ENCODE measurements at regions of chr10 and their contacts with region 1.

Region 1: GRCh38 chr10:72048450-72049124 is 39.8 kb downstream of the SPOCK2 start:
- DNase-seq: peak; percentile 66 to 95 (median 82)
- ATAC-seq: peak; percentile 85 to 98 (median 96)
- H3K4me3 ChIP-seq: no peak overlapping the region
- H3K4me3 Mint-ChIP-seq: no peak overlapping the region
- H3K27ac ChIP-seq: no peak overlapping the region
- H3K27ac Mint-ChIP-seq: peak overlapping the region; percentile 21 to 72
- H3K4me1 ChIP-seq: no peaks in the 10 kb centered on the region
- H3K4me1 Mint-ChIP-seq: peaks cover 7 to 8% (median 7%) of the 10 kb centered on the region in 3 donors
- H3K27me3 ChIP-seq: peaks cover 0 to under 1% of the 10 kb centered on the region in 2 experiments
- H3K27me3 Mint-ChIP-seq: no peaks in the 10 kb centered on the region

Region 2: DNA sequence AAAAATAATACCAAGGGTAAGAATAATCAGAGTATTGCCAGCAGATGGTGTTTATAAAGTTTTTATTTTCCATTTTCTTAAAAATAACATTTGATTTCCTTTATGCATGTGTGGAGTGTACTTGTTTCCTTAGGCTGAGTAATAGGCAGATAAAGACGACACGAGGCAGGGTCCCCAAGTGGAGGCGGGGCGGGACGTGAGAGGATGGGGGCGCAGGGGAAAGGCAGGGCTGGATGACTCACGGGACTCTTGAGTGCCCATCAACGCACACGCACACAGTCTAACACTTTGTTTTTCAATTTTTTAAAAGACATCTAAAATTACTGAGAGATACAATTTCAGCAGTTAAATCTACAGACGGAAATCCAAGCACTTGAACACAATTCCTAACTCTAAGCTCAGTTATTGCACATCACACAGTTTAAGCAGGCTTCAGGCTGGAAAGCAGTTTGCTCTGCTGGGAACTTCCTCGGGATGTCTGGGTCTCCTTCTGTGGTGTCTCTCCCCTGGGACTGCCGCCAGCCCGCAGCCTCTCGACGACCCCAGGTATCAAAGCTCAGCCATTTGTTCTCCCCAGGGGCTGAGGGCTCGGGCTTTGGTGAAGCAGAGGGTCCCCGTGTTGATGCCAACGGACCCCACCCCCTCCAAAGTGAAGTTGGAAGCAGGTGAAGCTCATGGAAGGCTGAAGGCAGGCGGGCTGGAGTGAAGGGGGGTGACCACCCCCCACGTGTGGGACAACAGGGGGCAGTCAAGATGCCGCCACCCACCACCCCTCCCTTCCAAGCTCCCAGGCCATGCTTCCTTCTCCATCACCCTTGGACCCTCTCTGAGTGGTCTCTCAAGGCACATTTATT is 10.6 kb after region 1 on chr10:
- CTCF ChIA-PET with region 1: interaction called, 6 to 13 read pairs
- POLR2A ChIA-PET with region 1: no interaction called
- DNase-seq: peak in 2 of 35 experiments; percentile 49 to 61
- ATAC-seq: peak; percentile 12 to 47 (median 28)
- H3K4me3 ChIP-seq: no peak overlapping the region
- H3K4me3 Mint-ChIP-seq: peak overlapping the region in 1 of 3 donors; percentile 28
- H3K27ac ChIP-seq: no peak overlapping the region
- H3K27ac Mint-ChIP-seq: peak overlapping the region; percentile 77 to 84
- H3K4me1 ChIP-seq: peaks cover 0 to 18% of the 10 kb centered on the region in 2 experiments
- H3K4me1 Mint-ChIP-seq: peaks cover 37 to 48% (median 47%) of the 10 kb centered on the region in 3 donors
- H3K27me3 ChIP-seq: no peaks in the 10 kb centered on the region
- H3K27me3 Mint-ChIP-seq: no peaks in the 10 kb centered on the region

Measured in T-cell (primary cell).